ENCODE measurements at regions of chrX and their contacts with region 1.

Region 1: GRCh38 chrX:119667111-119667878 is 25.7 kb downstream of the SEPTIN6 start:
- DNase-seq: peak; percentile 65

Region 2: DNA sequence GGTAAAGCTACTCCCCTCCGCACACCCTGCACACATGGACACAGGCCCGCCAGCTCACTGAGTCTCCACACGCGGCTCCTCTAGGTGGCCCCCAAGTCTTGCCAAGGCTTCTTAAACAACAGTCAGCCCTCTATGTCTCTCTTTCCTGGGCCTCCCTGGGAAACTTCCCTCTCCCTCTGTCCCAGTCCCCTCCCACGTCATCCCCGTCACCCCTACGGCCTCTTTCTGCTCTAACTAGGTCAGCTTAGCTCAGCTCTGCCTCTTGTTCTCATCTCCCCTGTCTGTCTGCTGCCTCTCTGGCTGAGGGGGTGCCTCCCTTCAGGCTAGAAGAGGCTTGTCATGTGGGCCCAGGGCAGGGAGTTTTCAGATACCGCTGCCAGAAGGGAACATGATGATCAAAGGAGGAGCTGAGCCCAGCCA is 13.2 kb before region 1 on chrX:
- CTCF ChIA-PET with region 1: interaction called, 4 read pairs
- POLR2A ChIA-PET with region 1: interaction called, 13 read pairs
- DNase-seq: no peak

Region 3: DNA sequence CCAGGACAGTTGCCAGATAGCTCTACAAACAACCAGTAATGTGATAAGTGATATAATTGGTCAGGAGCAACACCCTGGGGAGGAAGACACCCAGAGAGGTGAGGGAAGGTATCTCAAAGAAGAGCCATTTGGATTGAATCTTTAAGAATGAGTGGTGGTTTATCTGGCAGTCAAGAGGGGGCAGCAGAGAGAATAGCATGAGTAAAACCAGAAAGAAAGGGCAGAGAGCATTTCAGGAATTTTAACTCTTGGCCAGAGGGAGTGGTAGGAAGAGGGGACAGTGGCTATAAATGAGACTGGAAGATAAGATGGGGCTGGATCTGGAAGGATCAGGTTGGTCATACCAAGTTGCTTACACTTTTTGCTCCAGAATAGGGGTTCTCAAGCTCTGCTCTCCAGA is 31.6 kb after region 1 on chrX:
- CTCF ChIA-PET with region 1: no interaction called
- POLR2A ChIA-PET with region 1: no interaction called
- DNase-seq: peak; percentile 70